Activated CD4-positive, alpha-beta T cell treated with anti-CD3 and anti-CD28 coated beads for 36 hours (primary cell): ENCODE measurements at regions of chr6 and their contacts with region 1.

Region 1: GRCh38 chr6:32153564-32154513 is at the start of gene PPT2:
- DNase-seq: peak; percentile 88
- ATAC-seq: peak; percentile 76
- H3K4me3 Mint-ChIP-seq: peak within 1 kb of the TSS; percentile 91
- H3K27ac Mint-ChIP-seq: peak within 1 kb of the TSS; percentile 92
- H3K4me1 Mint-ChIP-seq: peaks cover 45% of the 10 kb centered on the region
- H3K27me3 Mint-ChIP-seq: peaks cover 11% of the 10 kb centered on the region
- total RNA-seq, gene PPT2: 9.9 to 10.1 TPM

Region 2: GRCh38 chr6:31958741-31959739 is 194.8 kb before region 1 on chr6 and contains the starts of genes NELFE and SKIC2:
- CTCF ChIA-PET with region 1: no interaction called
- POLR2A ChIA-PET with region 1: no interaction called
- intact Hi-C with region 1: loop called in 1 of 2 experiments (anchors 1 kb)
- DNase-seq: peak; percentile 99
- ATAC-seq: peak; percentile 99
- H3K4me3 Mint-ChIP-seq: peak within 1 kb of the TSS; percentile 95
- H3K27ac Mint-ChIP-seq: peak within 1 kb of the TSS; percentile 98
- H3K4me1 Mint-ChIP-seq: peaks cover 34% of the 10 kb centered on the region
- H3K27me3 Mint-ChIP-seq: no peaks in the 10 kb centered on the region
- total RNA-seq, gene NELFE: 74.3 to 95.1 TPM
- total RNA-seq, gene SKIC2: 90.2 to 104 TPM

Region 3: GRCh38 chr6:32047850-32048766 is 105.7 kb before region 1 on chr6:
- CTCF ChIA-PET with region 1: no interaction called
- POLR2A ChIA-PET with region 1: no interaction called
- intact Hi-C with region 1: loop called in 1 of 2 experiments (anchors 10 kb)
- DNase-seq: peak; percentile 82
- ATAC-seq: peak; percentile 90
- H3K4me3 Mint-ChIP-seq: no peak overlapping the region
- H3K27ac Mint-ChIP-seq: no peak overlapping the region
- H3K4me1 Mint-ChIP-seq: peaks cover 3% of the 10 kb centered on the region
- H3K27me3 Mint-ChIP-seq: no peaks in the 10 kb centered on the region

Region 4: GRCh38 chr6:32087574-32088486 is 66.0 kb before region 1 on chr6:
- CTCF ChIA-PET with region 1: no interaction called
- POLR2A ChIA-PET with region 1: no interaction called
- intact Hi-C with region 1: loop called in 1 of 2 experiments (anchors 1 kb)
- DNase-seq: peak; percentile 89
- ATAC-seq: peak; percentile 93
- H3K4me3 Mint-ChIP-seq: no peak overlapping the region
- H3K27ac Mint-ChIP-seq: no peak overlapping the region
- H3K4me1 Mint-ChIP-seq: peaks cover 9% of the 10 kb centered on the region
- H3K27me3 Mint-ChIP-seq: peaks cover 27% of the 10 kb centered on the region

Region 5: DNA sequence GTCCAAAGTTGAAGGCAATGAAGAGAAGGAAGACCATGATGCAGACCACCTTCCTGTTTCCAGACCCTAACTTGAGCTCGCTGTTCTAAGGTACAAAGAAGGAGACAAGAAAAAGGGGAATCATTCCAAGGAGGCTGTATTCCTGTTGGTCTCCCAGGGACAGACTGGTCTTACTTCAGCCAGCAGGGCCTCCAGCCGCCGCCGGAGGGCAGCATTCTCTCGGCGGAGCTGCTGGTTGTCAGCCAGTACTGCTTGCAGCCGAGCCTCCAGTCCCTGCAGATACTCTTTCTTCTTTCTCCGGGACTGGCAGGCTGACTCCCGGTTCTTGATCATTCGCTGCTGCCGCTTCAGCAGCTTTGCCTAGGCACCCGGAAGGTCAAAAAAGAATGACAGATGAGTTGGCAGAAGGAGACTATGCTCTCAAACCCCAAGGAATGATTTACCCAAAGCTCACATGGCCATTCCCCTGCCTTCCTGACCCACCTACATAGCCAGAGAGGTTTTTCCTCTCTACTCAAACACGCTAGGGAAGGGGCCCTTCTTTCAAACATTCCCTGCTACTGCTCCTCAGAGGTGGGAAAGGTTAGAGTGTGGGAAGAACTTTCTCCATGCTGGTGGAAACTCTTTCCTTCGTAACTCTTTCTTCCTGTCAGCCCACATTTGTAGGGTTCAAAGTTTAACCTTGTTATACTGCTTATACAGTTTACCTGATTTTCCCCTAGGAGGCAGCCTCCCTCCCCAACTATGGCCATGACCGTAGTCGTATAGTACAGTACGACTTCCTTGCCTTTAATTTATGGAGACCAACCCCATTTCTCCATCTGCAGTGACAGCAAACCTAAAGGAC is 34.8 kb before region 1 on chr6:
- CTCF ChIA-PET with region 1: interaction called, 6 read pairs
- POLR2A ChIA-PET with region 1: no interaction called
- intact Hi-C with region 1: loop called (anchors 1 kb)
- DNase-seq: peak; percentile 86
- ATAC-seq: peak; percentile 88
- H3K4me3 Mint-ChIP-seq: no peak overlapping the region
- H3K27ac Mint-ChIP-seq: no peak overlapping the region
- H3K4me1 Mint-ChIP-seq: peaks cover 14% of the 10 kb centered on the region
- H3K27me3 Mint-ChIP-seq: no peaks in the 10 kb centered on the region